Activated CD8-positive, alpha-beta T cell treated with anti-CD3 and anti-CD28 coated beads for 36 hours (primary cell): ENCODE measurements at regions of chr1 and their contacts with region 1.

Region 1: GRCh38 chr1:167563579-167564246 is 10.2 kb upstream of the CREG1 start:
- DNase-seq: no peak
- ATAC-seq: no peak
- H3K4me3 Mint-ChIP-seq: no peak overlapping the region
- H3K27ac Mint-ChIP-seq: peak overlapping the region; percentile 32
- H3K4me1 Mint-ChIP-seq: peaks cover 3% of the 10 kb centered on the region
- H3K27me3 Mint-ChIP-seq: no peaks in the 10 kb centered on the region
- CTCF ChIP-seq: no peak

Region 2: DNA sequence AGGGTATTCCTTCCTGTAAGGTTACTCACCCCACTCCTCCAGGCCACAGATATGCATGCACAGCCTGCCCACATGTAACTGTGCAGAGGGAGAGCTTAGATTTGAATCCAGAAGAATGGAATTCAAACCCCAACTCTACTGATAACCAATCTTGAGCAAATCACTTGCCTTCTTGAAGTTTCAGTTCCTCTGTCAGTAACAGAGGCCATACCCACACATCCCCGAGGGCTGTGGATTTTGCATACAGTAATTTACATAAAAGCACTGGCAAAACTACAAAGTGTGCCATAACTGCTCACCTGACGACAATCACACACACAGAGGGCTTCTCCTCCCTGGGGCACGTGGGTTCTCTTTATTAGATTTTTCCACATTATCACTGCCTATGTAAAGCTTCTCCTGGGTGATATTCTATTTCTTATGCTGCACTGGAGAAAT is 64.0 kb before region 1 on chr1:
- CTCF ChIA-PET with region 1: no interaction called
- POLR2A ChIA-PET with region 1: no interaction called
- intact Hi-C with region 1: no loop called
- DNase-seq: peak; percentile 70
- ATAC-seq: peak; percentile 40
- H3K4me3 Mint-ChIP-seq: peak overlapping the region; percentile 29
- H3K27ac Mint-ChIP-seq: peak overlapping the region; percentile 97
- H3K4me1 Mint-ChIP-seq: peaks cover 98% of the 10 kb centered on the region
- H3K27me3 Mint-ChIP-seq: no peaks in the 10 kb centered on the region
- CTCF ChIP-seq: no peak

Region 3: DNA sequence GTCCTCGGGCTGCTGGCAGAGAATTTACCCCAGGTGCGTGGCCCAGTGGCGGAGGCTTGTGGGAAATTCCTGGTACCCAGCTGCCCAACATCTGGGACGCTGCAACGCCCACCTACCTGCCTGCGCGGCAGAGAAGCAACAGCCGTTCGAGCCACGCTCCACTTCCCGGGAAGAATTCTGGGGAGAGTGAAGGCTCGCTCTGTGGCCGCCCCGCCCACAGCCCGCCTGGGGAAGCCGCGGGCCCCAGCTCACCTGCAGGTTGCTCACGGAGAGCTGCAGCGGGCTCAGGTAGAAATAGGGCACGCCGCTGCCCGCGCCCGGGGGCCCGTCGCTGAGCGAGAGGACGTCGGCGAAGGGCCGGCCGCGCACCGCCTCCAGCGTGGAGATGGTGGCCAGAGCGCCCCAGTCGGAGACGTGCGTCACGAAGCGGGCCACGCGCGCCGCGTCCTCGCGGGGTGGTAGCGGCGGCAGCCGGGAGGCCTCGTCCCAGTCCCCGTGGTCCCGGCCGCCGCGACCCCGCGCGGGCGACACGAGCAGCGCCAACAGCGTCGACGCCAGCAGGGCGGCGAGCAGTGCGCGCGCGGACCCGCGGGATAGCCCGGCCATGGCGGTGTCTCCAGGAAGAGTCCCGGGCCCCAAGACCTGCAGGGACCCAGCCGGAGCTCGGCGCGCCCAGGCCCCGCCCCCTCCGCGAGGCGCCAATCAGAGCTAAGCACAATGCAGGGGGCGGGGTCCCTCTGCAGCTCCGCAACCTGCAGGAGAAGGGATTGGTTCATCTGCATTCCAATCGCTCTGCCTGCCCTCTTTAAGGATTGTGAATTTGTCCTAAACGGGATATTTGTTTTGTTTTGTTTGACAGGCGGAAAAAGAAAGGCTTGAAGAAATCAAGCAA is 10.3 kb before region 1 on chr1 and contains the start of gene CREG1:
- CTCF ChIA-PET with region 1: interaction called, 50 read pairs
- POLR2A ChIA-PET with region 1: no interaction called
- intact Hi-C with region 1: no loop called
- DNase-seq: peak; percentile 92
- ATAC-seq: peak; percentile 100
- H3K4me3 Mint-ChIP-seq: peak within 1 kb of the TSS; percentile 86
- H3K27ac Mint-ChIP-seq: peak within 1 kb of the TSS; percentile 23
- H3K4me1 Mint-ChIP-seq: peaks cover 32% of the 10 kb centered on the region
- H3K27me3 Mint-ChIP-seq: no peaks in the 10 kb centered on the region
- CTCF ChIP-seq: no peak
- total RNA-seq, gene CREG1: 9.7 to 10.0 TPM

Region 4: DNA sequence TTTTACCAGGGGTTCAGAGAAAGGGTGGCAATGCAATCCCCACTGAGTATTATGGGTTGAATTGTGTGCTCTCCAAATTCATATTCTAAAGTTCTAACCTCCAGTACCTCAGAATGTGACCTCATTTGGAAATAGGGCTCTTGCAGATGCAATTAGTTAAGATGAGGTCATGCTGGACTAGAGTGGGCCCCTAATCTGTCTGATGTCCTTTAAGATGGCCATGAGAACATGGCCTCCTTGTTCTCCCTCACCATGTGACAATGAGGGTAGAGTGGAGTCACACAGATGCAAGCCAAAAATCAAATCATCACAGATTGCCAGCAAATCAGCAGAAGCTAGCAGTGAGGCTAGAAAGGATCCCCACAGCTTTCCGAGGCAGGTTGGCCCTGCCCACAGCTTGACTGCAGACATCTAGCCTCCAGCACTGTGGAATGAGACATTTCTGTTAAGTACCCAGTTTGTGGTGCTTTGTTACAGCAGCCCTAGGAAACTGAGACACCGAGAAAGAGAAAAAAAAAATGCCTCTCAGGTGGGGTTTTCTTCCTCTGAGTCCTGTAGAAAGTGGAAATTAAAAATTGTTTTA is 15.3 kb after region 1 on chr1:
- CTCF ChIA-PET with region 1: no interaction called
- POLR2A ChIA-PET with region 1: no interaction called
- intact Hi-C with region 1: no loop called
- DNase-seq: no peak
- ATAC-seq: no peak
- H3K4me3 Mint-ChIP-seq: no peak overlapping the region
- H3K27ac Mint-ChIP-seq: no peak overlapping the region
- H3K4me1 Mint-ChIP-seq: no peaks in the 10 kb centered on the region
- H3K27me3 Mint-ChIP-seq: peaks cover 12% of the 10 kb centered on the region
- CTCF ChIP-seq: no peak

Region 5: DNA sequence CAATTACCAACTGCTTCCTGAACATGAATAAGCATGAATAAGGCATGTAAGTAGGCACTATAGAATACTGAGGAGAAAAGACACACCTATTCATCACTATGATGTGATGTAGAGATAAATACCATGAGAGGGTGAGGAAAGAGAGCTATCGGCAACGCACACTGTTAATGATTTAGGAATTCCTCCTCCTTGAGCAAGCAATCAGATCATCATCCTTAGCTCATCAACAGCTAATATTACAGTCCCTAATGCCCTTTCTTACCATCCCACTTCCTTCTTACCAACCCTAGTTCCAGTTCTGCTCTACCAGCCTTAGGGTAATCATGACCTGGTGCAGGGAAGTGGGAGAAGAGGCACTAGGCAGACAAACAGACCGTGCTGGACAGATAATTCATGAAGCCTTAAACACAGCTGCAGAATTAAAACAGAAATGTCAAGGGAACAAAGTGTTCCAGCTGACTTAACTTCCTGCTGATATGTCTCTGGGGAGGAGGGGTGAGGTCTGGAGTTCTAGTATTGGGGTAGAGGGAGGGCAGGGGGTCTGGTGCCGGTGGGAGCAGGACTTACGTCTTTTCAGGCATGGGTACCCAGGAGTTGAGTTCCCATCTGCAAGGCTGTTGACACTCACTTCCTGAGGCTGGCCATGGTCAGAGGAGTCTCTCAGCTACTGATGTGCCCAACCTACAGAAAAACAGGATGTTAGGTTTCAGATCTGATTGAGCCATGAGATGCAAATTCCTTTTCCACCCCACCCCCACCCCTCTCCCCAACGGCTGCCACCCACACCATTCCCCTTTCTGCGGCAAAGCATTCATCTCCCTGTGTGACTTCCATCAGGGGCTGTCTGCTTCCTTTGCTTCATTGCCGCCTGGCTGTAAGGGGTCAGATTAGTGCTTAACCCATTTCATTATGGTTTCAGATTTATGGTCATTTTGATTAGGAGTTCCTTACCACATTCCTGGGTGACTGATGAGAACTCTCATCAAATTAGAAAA is 53.7 kb after region 1 on chr1:
- CTCF ChIA-PET with region 1: no interaction called
- POLR2A ChIA-PET with region 1: no interaction called
- intact Hi-C with region 1: no loop called
- DNase-seq: peak; percentile 35
- ATAC-seq: peak; percentile 68
- H3K4me3 Mint-ChIP-seq: peak overlapping the region; percentile 48
- H3K27ac Mint-ChIP-seq: peak overlapping the region; percentile 86
- H3K4me1 Mint-ChIP-seq: peaks cover 44% of the 10 kb centered on the region
- H3K27me3 Mint-ChIP-seq: no peaks in the 10 kb centered on the region
- CTCF ChIP-seq: no peak

Region 6: DNA sequence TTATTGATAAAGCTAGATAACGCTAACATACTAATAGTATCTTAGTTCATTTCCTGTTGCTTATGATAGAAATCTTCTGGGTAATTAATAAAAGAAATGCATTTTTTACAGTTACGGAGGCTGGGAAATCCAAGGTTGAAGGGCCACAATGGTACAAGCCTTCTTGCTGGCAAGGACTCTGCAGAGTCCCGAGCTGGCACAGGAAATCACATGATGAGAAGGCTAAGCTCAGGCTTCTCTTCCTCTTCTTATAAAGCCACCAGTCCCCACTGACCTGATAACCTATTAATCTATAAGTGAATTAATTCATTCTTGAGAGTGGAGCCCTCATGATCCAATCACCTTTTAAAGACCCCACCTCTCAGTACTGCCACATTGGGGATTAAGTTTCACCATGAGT is 490.4 kb after region 1 on chr1:
- CTCF ChIA-PET with region 1: no interaction called
- POLR2A ChIA-PET with region 1: no interaction called
- intact Hi-C with region 1: no loop called
- DNase-seq: no peak
- ATAC-seq: no peak
- H3K4me3 Mint-ChIP-seq: no peak overlapping the region
- H3K27ac Mint-ChIP-seq: no peak overlapping the region
- H3K4me1 Mint-ChIP-seq: no peaks in the 10 kb centered on the region
- H3K27me3 Mint-ChIP-seq: no peaks in the 10 kb centered on the region
- CTCF ChIP-seq: no peak